Natural killer cell (primary cell): ENCODE measurements at regions of chr18 and their contacts with region 1.

Region 1: GRCh38 chr18:12883684-12884405 is at the start of gene PTPN2:
- DNase-seq: peak; percentile 89 to 98
- ATAC-seq: peak; percentile 80 to 93 (median 83)
- H3K4me3 ChIP-seq: peak within 1 kb of the TSS; percentile 80
- H3K4me3 Mint-ChIP-seq: peak within 1 kb of the TSS; percentile 97
- H3K27ac ChIP-seq: peak within 1 kb of the TSS; percentile 100
- H3K27ac Mint-ChIP-seq: peak within 1 kb of the TSS; percentile 86 to 94
- H3K4me1 ChIP-seq: peaks cover 37% of the 10 kb centered on the region
- H3K4me1 Mint-ChIP-seq: peaks cover 56 to 70% of the 10 kb centered on the region in 2 donors
- H3K27me3 ChIP-seq: no peaks in the 10 kb centered on the region
- H3K27me3 Mint-ChIP-seq: no peaks in the 10 kb centered on the region
- CTCF ChIP-seq: no peak
- total RNA-seq, gene PTPN2: 110 to 115 (median 112) TPM

Region 2: GRCh38 chr18:12838178-12838634 is 45.6 kb before region 1 on chr18:
- intact Hi-C with region 1: loop called (anchors 1 kb)
- DNase-seq: peak; percentile 32 to 35
- ATAC-seq: peak in 2 of 3 donors; percentile 3 to 14
- H3K4me3 ChIP-seq: peak overlapping the region; percentile 1
- H3K4me3 Mint-ChIP-seq: peak overlapping the region; percentile 92
- H3K27ac ChIP-seq: peak overlapping the region; percentile 73
- H3K27ac Mint-ChIP-seq: peak overlapping the region; percentile 92 to 98
- H3K4me1 ChIP-seq: peaks cover 31% of the 10 kb centered on the region
- H3K4me1 Mint-ChIP-seq: peaks cover 63% of the 10 kb centered on the region in 2 donors
- H3K27me3 ChIP-seq: no peaks in the 10 kb centered on the region
- H3K27me3 Mint-ChIP-seq: no peaks in the 10 kb centered on the region
- CTCF ChIP-seq: no peak

Region 3: GRCh38 chr18:12947355-12948041 is 63.7 kb after region 1 on chr18 and contains the start of gene SEH1L:
- intact Hi-C with region 1: loop called (anchors 5 kb)
- DNase-seq: peak; percentile 96 to 98
- ATAC-seq: peak; percentile 86 to 96 (median 86)
- H3K4me3 ChIP-seq: peak within 1 kb of the TSS; percentile 93
- H3K4me3 Mint-ChIP-seq: peak within 1 kb of the TSS; percentile 97
- H3K27ac ChIP-seq: peak within 1 kb of the TSS; percentile 96
- H3K27ac Mint-ChIP-seq: peak within 1 kb of the TSS; percentile 90 to 92
- H3K4me1 ChIP-seq: peaks cover 17% of the 10 kb centered on the region
- H3K4me1 Mint-ChIP-seq: peaks cover 11 to 16% of the 10 kb centered on the region in 2 donors
- H3K27me3 ChIP-seq: no peaks in the 10 kb centered on the region
- H3K27me3 Mint-ChIP-seq: no peaks in the 10 kb centered on the region
- CTCF ChIP-seq: no peak
- total RNA-seq, gene SEH1L: 24.5 to 28.4 (median 26.5) TPM

Region 4: DNA sequence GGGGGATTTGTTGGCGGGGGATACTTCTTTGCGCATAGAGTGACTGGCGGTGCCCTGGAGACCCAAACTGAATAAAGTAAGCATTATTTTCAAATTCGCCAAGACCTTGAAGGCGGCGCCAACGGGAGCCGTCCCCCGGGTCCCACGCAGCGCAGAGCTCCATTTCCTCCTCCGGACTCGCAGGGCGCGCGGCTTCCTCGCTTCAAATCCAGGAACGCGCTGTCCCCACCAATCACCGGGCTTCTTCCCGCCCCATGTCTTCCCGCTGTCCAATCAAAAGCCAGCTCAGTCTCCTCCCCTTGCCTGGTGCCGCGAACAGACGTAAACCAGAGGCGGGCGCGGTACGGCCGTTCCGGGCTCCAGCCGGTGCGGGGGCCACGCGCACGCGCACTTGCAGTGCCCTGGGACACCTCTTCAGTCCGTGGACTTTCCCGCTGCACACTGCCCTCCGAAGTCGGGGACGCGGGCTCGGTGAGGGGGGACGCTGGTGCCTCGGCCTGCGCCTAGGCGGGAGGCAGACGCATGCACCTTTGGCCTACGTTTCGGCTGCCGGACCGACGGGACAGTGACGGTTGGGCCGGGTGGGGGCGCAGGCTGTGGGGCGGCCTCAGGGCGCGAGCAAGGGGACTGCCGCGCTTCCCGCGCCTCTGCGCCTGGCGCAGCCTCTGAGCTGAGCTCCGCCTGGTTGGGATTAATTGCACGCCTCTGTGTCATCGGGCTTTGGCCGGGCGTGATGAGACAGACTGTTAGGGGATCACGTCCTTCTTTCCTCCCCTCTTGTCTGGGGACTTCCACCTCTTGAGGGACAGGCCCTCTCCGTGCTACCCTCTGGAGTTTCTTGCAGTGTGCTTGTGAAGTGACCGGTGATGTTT is 107.4 kb after region 1 on chr18 and contains the start of gene CEP192:
- intact Hi-C with region 1: loop called (anchors 5 kb)
- DNase-seq: peak; percentile 95 to 99
- ATAC-seq: peak; percentile 92 to 96 (median 94)
- H3K4me3 ChIP-seq: peak within 1 kb of the TSS; percentile 56
- H3K4me3 Mint-ChIP-seq: peak within 1 kb of the TSS; percentile 97
- H3K27ac ChIP-seq: peak within 1 kb of the TSS; percentile 82
- H3K27ac Mint-ChIP-seq: peak within 1 kb of the TSS; percentile 83 to 91
- H3K4me1 ChIP-seq: peaks cover 21% of the 10 kb centered on the region
- H3K4me1 Mint-ChIP-seq: peaks cover 37 to 39% of the 10 kb centered on the region in 2 donors
- H3K27me3 ChIP-seq: no peaks in the 10 kb centered on the region
- H3K27me3 Mint-ChIP-seq: peaks cover 0 to 3% of the 10 kb centered on the region in 2 donors
- CTCF ChIP-seq: peak; percentile 22
- total RNA-seq, gene CEP192: 41.3 to 47.9 (median 43.4) TPM